ENCODE measurements at regions of chr15 and their contacts with region 1.

Region 1: GRCh38 chr15:33315044-33315443 is 4.3 kb downstream of the RYR3 start:
- DNase-seq: no peak
- ATAC-seq: no peak
- H3K4me3 ChIP-seq: no peak overlapping the region
- H3K27ac ChIP-seq: no peak overlapping the region
- H3K4me1 ChIP-seq: no peaks in the 10 kb centered on the region
- H3K27me3 ChIP-seq: no peaks in the 10 kb centered on the region
- CTCF ChIP-seq: no peak
- POLR2A ChIP-seq: no peak

Region 2: DNA sequence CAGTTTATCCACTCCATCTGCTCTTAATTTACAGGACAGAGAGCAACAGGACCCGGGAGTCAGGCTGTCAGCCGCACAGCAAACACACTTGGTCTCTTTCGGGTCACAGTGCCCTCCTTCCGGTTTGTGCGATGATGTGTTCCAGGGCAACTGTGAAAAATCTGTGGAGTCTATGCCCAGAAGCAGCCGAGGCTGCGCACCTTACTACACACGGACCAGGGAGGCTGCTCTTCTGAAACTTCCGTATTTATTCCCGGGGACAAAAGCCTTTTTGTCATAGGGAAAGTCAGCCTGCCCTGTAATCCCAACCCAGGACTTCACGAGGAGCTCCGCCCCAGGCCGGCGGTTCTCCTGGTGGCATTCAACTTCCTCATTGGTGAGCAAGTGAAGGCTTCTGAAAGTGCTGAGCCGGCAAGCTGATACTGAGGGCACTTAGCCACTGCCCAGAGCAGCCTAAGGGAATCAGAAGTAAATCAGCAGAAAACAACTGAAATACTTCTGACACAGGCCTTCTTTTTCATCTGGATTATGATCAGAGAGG is 247.0 kb before region 1 on chr15:
- intact Hi-C with region 1: loop called in 1 of 2 experiments (anchors 5 kb)
- DNase-seq: peak; percentile 51 to 68 (median 52)
- ATAC-seq: peak; percentile 74 to 83 (median 80)
- H3K4me3 ChIP-seq: no peak overlapping the region
- H3K27ac ChIP-seq: no peak overlapping the region
- H3K4me1 ChIP-seq: no peaks in the 10 kb centered on the region
- H3K27me3 ChIP-seq: no peaks in the 10 kb centered on the region
- CTCF ChIP-seq: no peak
- POLR2A ChIP-seq: no peak

Region 3: GRCh38 chr15:33358306-33358705 is 43.3 kb after region 1 on chr15:
- intact Hi-C with region 1: no loop called
- DNase-seq: no peak
- ATAC-seq: no peak
- H3K4me3 ChIP-seq: no peak overlapping the region
- H3K27ac ChIP-seq: no peak overlapping the region
- H3K4me1 ChIP-seq: no peaks in the 10 kb centered on the region
- H3K27me3 ChIP-seq: no peaks in the 10 kb centered on the region
- CTCF ChIP-seq: no peak
- POLR2A ChIP-seq: no peak

Region 4: DNA sequence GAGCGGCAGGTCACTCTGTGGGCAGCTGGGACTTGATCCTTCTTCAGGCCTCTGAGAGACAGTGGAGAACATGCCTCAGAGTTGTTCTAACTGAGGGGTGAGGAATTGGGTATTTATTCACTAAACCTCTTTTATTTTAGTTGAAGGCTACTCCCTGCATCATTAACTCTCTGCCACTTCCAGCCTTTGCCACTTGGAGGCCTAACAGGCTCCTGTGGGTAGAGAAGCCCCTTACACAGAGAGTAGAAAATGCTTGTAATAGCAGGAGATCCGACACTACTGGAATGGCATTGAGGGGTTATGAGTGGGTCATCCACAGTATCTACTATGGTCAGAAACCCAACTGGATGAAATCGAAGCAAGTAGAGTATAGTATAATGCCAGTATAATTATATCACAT is 77.4 kb after region 1 on chr15:
- intact Hi-C with region 1: no loop called
- DNase-seq: no peak
- ATAC-seq: no peak
- H3K4me3 ChIP-seq: no peak overlapping the region
- H3K27ac ChIP-seq: no peak overlapping the region
- H3K4me1 ChIP-seq: no peaks in the 10 kb centered on the region
- H3K27me3 ChIP-seq: no peaks in the 10 kb centered on the region
- CTCF ChIP-seq: no peak
- POLR2A ChIP-seq: no peak